Psoas muscle (tissue), 8 donors: ENCODE measurements at regions of chr22 and their contacts with region 1.

Region 1: DNA sequence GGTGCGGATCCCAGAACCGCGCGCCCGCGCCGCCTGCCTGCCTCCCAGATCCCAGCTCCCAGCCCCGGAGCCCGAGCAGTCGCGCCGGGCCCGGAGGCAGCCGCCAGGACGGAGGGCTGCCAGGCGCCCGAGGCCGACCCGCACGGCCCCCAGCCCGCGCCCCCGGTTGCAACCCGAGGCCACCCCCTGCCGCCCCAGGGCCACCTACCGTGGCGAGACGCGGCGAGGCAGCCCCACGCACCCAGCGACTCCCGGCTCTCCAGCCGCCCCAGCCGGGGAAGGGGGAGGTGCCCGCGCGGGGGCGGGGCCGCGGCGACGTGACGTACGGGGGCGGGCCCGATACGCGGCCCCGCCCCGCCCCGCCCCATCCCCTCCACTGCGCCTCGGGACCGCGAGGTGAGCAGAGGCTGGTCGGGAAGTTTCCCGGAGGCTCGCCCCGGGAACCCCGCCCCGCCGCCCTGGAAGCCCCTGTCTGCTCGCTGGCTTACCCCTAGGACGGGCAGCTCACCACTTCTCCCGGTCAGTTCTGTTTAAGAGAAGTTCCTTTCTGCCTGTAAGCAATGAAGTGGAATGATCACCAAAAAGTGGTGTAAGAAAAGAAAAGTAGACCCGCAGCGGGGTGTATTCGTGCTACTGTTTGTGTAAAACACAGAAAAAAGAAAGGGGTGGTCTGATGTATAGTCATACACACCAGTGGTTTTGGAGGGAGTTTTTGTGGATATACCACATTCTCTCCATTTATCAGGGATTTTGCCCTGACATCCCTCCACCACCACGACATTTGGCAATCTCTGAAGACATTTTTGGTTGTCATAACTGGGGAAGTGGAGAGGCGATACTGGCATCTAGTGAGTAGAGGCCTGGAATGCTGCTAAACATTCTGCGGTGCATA is at the start of gene TPST2:
- DNase-seq: peak; percentile 81 to 88
- ATAC-seq: peak; percentile 87 to 91 (median 90)
- H3K4me3 ChIP-seq: peak within 1 kb of the TSS; percentile 98
- H3K27ac ChIP-seq: peak within 1 kb of the TSS; percentile 89
- H3K4me1 ChIP-seq: peaks cover 29% of the 10 kb centered on the region
- H3K27me3 ChIP-seq: no peaks in the 10 kb centered on the region
- CTCF ChIP-seq: peak; percentile 2
- total RNA-seq, gene TPST2: 22.1 to 41.3 (median 28.5) TPM

Region 2: DNA sequence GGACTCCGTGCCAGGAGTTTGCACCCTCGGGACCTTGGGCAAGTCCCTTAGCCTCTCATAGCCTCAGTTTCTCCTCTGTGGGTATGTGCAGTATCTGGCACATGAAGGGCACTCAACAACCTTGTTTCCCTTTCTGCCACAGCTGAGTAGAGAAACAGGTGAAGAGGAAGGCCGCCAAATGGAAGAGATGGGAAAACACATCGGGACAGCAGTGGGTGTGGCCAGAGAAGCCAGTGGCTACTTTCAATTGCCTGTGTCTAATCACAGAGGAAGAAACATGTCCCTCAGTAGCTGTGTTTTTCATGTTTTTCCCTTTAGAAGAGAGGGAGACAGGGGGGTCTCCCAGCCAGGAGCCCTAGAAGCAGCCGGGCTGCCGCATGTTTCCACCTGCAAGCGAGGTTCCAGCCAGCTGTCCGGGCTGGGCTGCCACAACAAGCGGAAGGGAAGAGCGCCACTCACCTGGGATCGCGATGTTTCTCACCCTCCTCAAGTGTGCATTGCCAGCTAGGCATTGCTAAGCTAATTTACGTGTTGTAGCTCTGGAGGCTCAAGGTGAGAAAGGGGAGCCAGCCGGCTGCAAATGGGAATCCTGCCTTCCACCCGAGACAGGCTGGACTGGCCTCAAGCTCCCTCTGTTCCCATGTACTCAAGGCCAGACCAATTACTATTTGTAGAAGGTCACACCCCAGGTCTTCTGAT is 144.4 kb before region 1 on chr22:
- intact Hi-C with region 1: no loop called
- DNase-seq: no peak
- ATAC-seq: peak in 3 of 4 donors; percentile 36 to 61 (median 41)
- H3K4me3 ChIP-seq: no peak overlapping the region
- H3K27ac ChIP-seq: no peak overlapping the region
- H3K4me1 ChIP-seq: no peaks in the 10 kb centered on the region
- H3K27me3 ChIP-seq: no peaks in the 10 kb centered on the region
- CTCF ChIP-seq: no peak

Region 3: GRCh38 chr22:26483439-26484359 is 106.4 kb before region 1 on chr22 and contains the starts of genes HPS4 and SRRD:
- intact Hi-C with region 1: loop called in 1 of 2 experiments (anchors 5 kb)
- DNase-seq: peak; percentile 91 to 95
- ATAC-seq: peak; percentile 94 to 96 (median 95)
- H3K4me3 ChIP-seq: peak within 1 kb of the TSS; percentile 99
- H3K27ac ChIP-seq: peak within 1 kb of the TSS; percentile 100
- H3K4me1 ChIP-seq: peaks cover 60% of the 10 kb centered on the region
- H3K27me3 ChIP-seq: no peaks in the 10 kb centered on the region
- CTCF ChIP-seq: no peak
- total RNA-seq, gene HPS4: 7.4 to 12.5 (median 10.4) TPM
- total RNA-seq, gene SRRD: 25.4 to 36.6 (median 28.9) TPM

Region 4: DNA sequence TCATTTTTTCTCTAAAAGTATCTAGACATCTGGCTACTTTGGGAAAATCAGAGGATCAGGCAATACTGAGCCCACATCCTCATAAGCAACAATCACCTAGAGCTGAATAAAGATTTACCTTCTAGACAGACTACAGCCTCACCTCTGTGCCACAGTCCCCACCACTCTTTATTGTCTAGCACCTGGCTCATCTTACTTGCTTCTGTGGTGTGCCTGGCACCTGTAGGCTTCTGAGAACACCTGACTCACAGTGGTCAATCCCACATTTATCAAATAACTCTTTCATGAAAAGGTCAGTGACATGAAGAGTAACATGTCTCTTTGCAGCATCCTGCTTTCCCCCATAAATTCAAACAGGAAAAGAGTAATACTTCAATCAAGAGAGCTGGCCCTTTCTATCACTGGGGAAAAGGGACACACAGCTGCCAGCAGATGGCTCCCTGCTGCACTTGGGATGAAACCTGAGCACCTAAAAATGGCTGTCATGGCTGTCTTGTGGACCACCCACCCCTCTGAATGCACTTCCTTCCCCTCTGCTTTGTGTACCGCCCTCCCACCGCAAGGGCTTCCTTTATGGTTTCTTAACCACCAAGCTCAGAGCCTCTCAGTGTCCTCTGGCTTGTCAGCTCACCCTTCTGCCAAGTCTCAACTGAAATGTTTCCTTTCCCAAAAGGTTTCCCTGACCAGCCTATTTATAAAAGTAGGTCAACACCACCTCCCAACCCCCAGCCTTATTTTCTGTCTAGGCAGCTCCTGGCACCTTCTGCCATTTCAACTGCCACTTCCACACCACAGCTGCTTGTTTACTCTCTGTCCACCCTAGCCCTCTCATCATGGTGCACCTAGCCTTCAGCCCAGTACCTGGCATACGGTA is 87.2 kb before region 1 on chr22:
- intact Hi-C with region 1: loop called in 1 of 2 experiments (anchors 5 kb)
- DNase-seq: peak; percentile 29 to 75
- ATAC-seq: peak; percentile 83 to 91 (median 89)
- H3K4me3 ChIP-seq: peak overlapping the region; percentile 13
- H3K27ac ChIP-seq: peak overlapping the region; percentile 88
- H3K4me1 ChIP-seq: peaks cover 41% of the 10 kb centered on the region
- H3K27me3 ChIP-seq: no peaks in the 10 kb centered on the region
- CTCF ChIP-seq: peak; percentile 53

Region 5: DNA sequence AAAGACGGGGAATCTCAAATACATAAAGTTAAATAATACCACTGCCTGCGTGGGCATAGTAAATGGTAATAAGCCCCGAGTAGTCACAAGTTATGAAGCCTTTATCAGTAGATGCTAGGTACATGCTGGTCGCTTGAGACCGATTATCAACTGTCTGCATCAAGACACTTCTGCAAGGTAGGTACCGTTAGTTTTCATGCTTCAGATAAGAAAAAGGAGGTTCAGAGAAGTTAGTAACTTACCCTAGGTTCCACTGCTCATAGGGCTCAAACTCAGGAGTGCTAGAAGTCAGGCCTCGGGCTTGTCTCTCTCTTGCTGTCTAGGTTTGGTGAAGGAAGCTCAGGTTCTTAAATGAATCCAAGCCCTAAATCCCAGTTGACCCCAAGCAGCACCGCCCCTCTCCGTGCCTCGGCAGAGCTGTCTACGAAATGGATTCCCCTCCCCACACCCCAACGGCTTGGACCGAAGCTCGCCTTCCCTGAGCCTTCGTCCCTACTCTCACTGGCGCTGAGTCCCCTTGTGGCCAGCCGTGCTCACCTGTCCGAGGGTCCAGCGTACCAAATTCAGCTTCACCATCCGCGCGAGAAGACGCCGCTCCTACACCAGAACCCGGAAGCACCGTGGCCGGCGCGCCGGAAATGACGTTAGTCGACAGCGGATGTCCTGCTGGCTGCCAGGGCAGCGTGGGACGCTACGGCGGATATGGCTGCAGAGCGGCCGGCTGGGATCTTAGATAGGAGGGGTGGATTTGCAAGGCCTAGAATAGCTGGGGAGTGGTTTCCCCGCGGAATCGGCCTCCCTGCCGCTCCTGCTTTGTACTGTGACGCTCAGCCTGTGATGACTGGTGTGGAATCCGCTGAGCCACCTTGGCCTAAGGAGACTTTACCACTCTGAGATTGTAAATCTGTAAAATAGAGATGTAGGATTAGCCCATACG is 78.0 kb before region 1 on chr22 and contains the start of gene TFIP11:
- intact Hi-C with region 1: loop called (anchors 5 kb)
- DNase-seq: peak; percentile 95 to 98
- ATAC-seq: peak; percentile 97 to 98 (median 97)
- H3K4me3 ChIP-seq: peak within 1 kb of the TSS; percentile 81
- H3K27ac ChIP-seq: peak within 1 kb of the TSS; percentile 85
- H3K4me1 ChIP-seq: peaks cover 25% of the 10 kb centered on the region
- H3K27me3 ChIP-seq: no peaks in the 10 kb centered on the region
- CTCF ChIP-seq: no peak
- total RNA-seq, gene TFIP11: 29.1 to 48.6 (median 33.5) TPM

Region 6: DNA sequence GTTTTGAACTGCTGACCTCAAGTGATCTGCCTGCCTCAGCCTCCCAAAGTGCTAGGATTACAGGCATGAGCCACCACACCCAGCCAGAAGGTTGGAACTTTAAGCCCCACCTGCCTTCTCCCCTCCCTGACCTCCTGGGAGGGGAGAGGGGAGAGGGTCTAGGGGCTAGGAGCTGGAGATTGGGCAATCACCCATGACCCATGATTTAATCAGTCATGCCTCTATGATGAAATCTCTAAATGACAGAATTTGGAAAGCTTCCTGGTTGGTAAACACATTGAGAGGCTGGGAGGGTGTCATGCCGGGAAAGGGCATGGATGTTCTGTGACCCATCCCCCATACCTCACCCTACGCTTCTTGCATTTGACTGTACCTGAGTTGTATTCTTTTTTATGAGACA is 60.7 kb before region 1 on chr22:
- intact Hi-C with region 1: loop called in 1 of 2 experiments (anchors 5 kb)
- DNase-seq: peak; percentile 18 to 76
- ATAC-seq: peak; percentile 52 to 70 (median 66)
- H3K4me3 ChIP-seq: no peak overlapping the region
- H3K27ac ChIP-seq: peak overlapping the region; percentile 84
- H3K4me1 ChIP-seq: peaks cover 28% of the 10 kb centered on the region
- H3K27me3 ChIP-seq: no peaks in the 10 kb centered on the region
- CTCF ChIP-seq: no peak

Region 7: DNA sequence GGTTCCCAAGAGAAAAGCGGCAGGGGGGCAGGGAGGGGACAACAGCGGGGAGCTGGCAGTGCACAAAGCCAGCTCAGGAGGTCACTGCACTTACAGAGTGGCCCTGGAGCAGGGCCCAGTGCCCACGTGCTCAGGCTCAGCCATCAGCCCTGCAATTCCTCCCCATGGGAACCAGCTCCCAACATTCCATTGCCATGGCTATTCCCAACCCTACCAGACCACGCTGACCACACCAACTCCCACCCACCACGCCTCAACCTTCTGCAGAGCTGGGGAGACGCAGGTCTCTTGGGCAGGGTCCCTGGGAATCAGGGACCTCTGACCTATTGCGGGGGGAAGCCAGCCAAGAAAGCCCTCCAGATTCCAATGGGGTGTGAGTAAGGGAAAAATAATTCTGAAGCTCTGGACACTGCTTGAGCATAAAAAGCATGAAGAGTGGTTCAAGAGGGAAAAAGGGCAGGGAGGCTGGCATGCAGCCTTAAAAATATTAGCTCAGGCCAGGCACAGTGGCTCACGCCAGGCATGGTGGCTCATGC is 39.5 kb before region 1 on chr22:
- intact Hi-C with region 1: loop called in 1 of 2 experiments (anchors 5 kb)
- DNase-seq: peak in 1 of 2 donors; percentile 62
- ATAC-seq: peak; percentile 52 to 79 (median 72)
- H3K4me3 ChIP-seq: no peak overlapping the region
- H3K27ac ChIP-seq: peak overlapping the region; percentile 69
- H3K4me1 ChIP-seq: peaks cover 67% of the 10 kb centered on the region
- H3K27me3 ChIP-seq: no peaks in the 10 kb centered on the region
- CTCF ChIP-seq: no peak

Region 8: GRCh38 chr22:27086080-27087044 is 496.3 kb after region 1 on chr22:
- intact Hi-C with region 1: no loop called
- DNase-seq: no peak
- ATAC-seq: no peak
- H3K4me3 ChIP-seq: no peak overlapping the region
- H3K27ac ChIP-seq: no peak overlapping the region
- H3K4me1 ChIP-seq: no peaks in the 10 kb centered on the region
- H3K27me3 ChIP-seq: peaks cover 0 to 61% (median 9%) of the 10 kb centered on the region in 3 donors
- CTCF ChIP-seq: no peak